GM10248 (cell line): ENCODE measurements at regions of chr4 and their contacts with region 1.

Region 1: GRCh38 chr4:700587-701264 is 4.9 kb upstream of the PCGF3 start:
- DNase-seq: no peak
- CTCF ChIP-seq: no peak

Region 2: DNA sequence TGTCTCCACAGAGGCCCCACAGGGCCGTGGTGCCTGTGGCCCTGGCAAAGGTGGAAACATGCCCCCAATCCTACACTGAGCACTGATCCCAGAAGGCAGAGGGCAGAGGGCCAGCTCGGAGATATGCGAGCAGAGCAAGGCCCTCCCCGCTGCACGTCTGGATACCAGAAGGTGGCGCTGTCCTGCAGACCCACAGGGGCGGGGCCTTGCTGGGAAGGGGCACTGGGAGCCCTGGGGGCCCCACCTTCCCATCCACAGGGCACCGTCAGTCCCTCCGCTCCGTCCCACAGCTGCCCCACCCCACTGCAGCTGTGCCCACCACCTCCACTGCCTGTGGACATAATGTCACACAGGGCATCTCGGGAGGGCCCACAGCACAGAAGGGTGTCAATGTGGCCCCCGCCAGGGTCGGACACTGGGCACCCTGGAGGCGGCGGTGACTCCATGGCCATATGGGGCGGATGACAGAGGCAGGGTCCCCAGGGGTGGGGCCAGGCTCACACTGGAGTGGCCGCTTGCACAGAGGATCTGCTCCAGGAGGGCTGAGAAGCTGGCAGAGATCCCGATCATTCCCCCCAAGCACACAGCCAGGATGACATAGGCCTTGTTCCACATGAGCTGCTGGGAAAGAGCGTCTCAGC is 16.6 kb before region 1 on chr4:
- CTCF ChIA-PET with region 1: interaction called, 13 read pairs
- POLR2A ChIA-PET with region 1: no interaction called
- DNase-seq: peak; percentile 69
- CTCF ChIP-seq: peak; percentile 83